CD8-positive, alpha-beta memory T cell (primary cell): ENCODE measurements at regions of chr9 and their contacts with region 1.

Region 1: DNA sequence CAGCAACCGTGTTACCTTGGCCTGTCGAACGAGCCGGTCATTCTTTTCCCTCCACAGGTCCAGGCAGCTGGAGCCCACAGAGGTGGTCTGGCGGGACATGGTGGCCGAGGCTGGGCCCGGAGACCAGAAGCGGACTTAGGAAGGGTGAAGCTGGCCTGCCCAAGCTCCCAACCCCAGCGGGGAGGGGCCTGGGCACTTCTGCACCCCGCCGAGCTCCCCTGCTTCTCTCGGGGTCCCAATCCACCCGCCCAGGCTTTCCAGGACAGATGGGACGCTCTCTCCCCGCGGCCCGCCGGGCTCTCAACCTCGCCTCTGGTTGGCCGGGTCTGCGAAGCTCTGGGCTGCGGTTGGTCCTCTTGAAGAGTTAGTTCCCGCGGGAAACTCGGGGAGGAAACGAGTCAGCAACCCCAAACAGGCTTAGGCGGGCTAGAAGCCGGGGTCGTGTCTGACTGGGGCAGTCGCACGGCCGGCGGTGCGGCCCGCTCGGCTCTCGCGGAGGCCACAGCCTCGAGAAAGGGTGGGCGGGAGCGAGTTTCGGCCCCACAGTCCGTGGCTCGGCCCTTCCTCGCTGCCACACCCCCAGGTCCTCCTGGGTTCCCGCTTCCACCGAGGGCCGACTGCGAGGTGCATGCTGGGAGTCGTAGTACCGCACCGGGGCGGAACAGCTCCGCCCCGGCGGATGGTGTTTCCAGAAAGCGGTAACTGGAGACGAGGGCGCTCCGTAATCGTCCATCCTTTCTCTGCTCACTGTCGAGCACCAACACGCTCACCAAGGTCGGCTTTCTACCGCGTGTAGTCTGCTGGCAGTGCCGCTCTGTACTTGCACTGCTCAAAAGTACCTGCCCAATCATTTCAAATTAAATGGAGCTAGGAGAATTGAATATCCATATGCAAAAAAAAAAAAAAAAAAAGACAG is at the start of gene FANCG:
- DNase-seq: peak; percentile 67 to 84 (median 75)
- H3K4me3 ChIP-seq: peak within 1 kb of the TSS; percentile 83
- H3K4me3 Mint-ChIP-seq: peak within 1 kb of the TSS; percentile 91 to 96 (median 93)
- H3K27ac ChIP-seq: peak within 1 kb of the TSS; percentile 71
- H3K27ac Mint-ChIP-seq: peak within 1 kb of the TSS; percentile 57 to 95 (median 92)
- H3K4me1 ChIP-seq: peaks cover 10% of the 10 kb centered on the region
- H3K4me1 Mint-ChIP-seq: peaks cover 18 to 31% (median 22%) of the 10 kb centered on the region in 3 donors
- H3K27me3 ChIP-seq: no peaks in the 10 kb centered on the region
- H3K27me3 Mint-ChIP-seq: no peaks in the 10 kb centered on the region
- total RNA-seq, gene FANCG: 90.6 to 95.4 TPM

Region 2: GRCh38 chr9:35102926-35103659 is 23.4 kb after region 1 on chr9 and contains the start of gene STOML2:
- CTCF ChIA-PET with region 1: interaction called, 51 read pairs
- POLR2A ChIA-PET with region 1: interaction called, 6 read pairs
- DNase-seq: peak; percentile 85 to 95 (median 91)
- H3K4me3 ChIP-seq: peak within 1 kb of the TSS; percentile 80
- H3K4me3 Mint-ChIP-seq: peak within 1 kb of the TSS; percentile 84 to 98 (median 90)
- H3K27ac ChIP-seq: peak within 1 kb of the TSS; percentile 86
- H3K27ac Mint-ChIP-seq: peak within 1 kb of the TSS; percentile 80 to 100 (median 99)
- H3K4me1 ChIP-seq: peaks cover 15% of the 10 kb centered on the region
- H3K4me1 Mint-ChIP-seq: peaks cover 27 to 35% (median 33%) of the 10 kb centered on the region in 3 donors
- H3K27me3 ChIP-seq: no peaks in the 10 kb centered on the region
- H3K27me3 Mint-ChIP-seq: peaks cover 0 to 2% of the 10 kb centered on the region in 2 donors
- total RNA-seq, gene STOML2: 258 to 271 TPM